Psoas muscle (tissue), 8 donors: ENCODE measurements at regions of chr11 and their contacts with region 1.

Region 1: DNA sequence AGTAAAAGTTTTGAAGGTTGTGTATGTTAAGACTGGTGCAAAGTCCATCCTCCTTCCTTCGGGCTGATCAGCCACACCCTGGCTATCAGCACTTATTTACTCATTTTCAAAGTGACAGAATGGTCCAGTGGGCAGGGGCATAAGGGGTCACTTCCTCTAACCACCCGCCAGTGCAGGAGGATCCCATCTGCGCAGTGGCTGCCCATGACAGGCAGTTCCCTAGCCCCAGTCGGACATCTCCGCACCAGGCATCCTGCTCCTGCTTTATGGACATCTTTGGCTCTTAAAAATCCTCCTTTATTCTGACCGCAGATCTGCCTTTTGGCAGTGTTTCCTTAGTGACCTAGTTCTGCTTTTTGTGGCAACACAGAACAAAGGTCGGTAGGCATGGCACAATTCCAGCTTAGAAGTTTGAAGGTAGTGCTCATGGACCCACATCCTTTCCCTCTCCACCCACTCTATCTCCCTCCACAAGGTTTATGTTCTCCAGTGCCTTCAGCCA is 55.9 kb downstream of the BMAL1 start:
- DNase-seq: no peak
- ATAC-seq: no peak
- H3K4me3 ChIP-seq: no peak overlapping the region
- H3K27ac ChIP-seq: no peak overlapping the region
- H3K4me1 ChIP-seq: peaks cover 90% of the 10 kb centered on the region
- H3K27me3 ChIP-seq: no peaks in the 10 kb centered on the region
- CTCF ChIP-seq: no peak

Region 2: DNA sequence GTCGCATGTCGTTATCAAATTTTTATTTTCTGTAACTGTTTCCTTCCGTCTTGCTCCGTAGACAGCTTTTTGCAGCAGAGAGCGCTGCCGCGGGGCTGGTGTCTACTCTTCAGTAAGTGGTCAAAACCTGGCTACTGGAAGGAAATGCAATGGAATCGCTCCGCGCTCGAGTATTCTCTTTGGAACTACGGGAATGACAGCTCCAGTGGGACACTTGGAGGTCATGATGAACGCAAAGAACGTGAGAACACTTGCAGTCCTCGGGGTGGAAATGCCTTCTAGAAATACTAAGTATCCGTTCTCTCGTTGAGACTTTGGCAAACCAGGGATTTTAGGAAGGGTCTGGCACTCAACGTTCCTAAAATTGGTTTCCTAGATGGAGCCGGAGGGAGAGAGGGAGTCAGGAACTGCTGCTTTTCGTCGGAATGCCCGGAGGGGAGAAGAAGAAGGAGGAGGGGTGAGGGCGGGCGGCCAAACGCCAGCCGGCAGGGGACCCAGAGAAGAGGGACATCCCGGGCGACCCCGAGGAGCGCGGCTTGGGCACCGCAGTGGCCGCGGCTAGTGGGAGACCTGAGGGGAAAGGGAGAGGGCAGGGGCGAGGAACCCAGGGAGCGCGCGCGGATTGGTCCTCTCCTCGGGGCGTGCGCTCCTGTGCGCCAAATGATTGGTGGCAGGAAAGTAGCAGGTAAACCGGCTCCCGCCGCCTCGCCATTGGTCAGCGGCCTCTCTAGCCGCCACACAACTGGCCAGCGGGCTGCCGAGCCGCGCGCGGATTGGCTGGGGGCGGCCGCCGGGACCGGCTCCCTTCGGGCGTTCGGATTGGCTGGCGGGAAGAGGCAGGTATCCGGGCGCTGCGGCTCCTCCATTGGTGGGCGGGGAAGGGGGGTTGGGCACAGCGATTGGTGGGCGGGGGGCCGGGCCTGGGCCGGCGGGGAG is 56.4 kb before region 1 on chr11:
- intact Hi-C with region 1: loop called (anchors 5 kb)
- DNase-seq: peak; percentile 99
- ATAC-seq: peak; percentile 92 to 96 (median 95)
- H3K4me3 ChIP-seq: peak overlapping the region; percentile 99
- H3K27ac ChIP-seq: peak overlapping the region; percentile 93
- H3K4me1 ChIP-seq: peaks cover 35% of the 10 kb centered on the region
- H3K27me3 ChIP-seq: peaks cover 0 to 4% (median 0%) of the 10 kb centered on the region in 3 donors
- CTCF ChIP-seq: no peak

Region 3: DNA sequence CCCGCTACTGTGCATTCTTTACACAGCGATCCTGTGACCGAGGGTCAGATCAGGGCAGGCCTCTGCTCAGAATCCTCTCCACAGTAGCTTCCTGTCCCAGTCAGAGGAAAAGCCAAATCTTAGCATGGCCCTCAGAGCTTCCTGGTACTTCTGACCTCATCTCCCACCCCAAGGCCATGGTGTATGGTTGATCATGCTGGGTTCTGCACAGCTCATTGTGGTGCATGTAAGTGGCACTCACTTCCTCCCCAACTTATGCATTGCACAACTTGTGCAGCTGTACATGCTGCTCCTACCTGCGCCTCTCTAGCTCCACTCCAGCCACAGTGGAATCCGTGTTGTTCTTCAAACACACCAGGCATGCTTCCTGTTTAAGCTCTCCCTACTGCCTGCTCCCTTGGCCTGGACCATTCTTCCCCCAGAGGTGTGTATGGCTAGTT is 35.6 kb before region 1 on chr11:
- intact Hi-C with region 1: loop called in 1 of 2 experiments (anchors 5 kb)
- DNase-seq: no peak
- ATAC-seq: peak in 3 of 4 donors; percentile 41 to 66 (median 56)
- H3K4me3 ChIP-seq: no peak overlapping the region
- H3K27ac ChIP-seq: no peak overlapping the region
- H3K4me1 ChIP-seq: peaks cover 96% of the 10 kb centered on the region
- H3K27me3 ChIP-seq: no peaks in the 10 kb centered on the region
- CTCF ChIP-seq: no peak

Region 4: GRCh38 chr11:13405220-13405619 is 71.7 kb after region 1 on chr11:
- intact Hi-C with region 1: no loop called
- DNase-seq: no peak
- ATAC-seq: no peak
- H3K4me3 ChIP-seq: no peak overlapping the region
- H3K27ac ChIP-seq: no peak overlapping the region
- H3K4me1 ChIP-seq: no peaks in the 10 kb centered on the region
- H3K27me3 ChIP-seq: no peaks in the 10 kb centered on the region
- CTCF ChIP-seq: no peak